ENCODE measurements at regions of chr1 and their contacts with region 1.

Region 1: GRCh38 chr1:26799479-26800142 is 11.9 kb downstream of the PIGV start:
- DNase-seq: peak; percentile 63
- ATAC-seq: peak; percentile 76
- H3K4me3 Mint-ChIP-seq: peak overlapping the region; percentile 56
- H3K27ac Mint-ChIP-seq: peak overlapping the region; percentile 97
- H3K4me1 Mint-ChIP-seq: peaks cover 47% of the 10 kb centered on the region
- H3K27me3 Mint-ChIP-seq: no peaks in the 10 kb centered on the region

Region 2: GRCh38 chr1:26761217-26761616 is 38.4 kb before region 1 on chr1:
- CTCF ChIA-PET with region 1: no interaction called
- DNase-seq: no peak
- ATAC-seq: no peak
- H3K4me3 Mint-ChIP-seq: no peak overlapping the region
- H3K27ac Mint-ChIP-seq: no peak overlapping the region
- H3K4me1 Mint-ChIP-seq: peaks cover 4% of the 10 kb centered on the region
- H3K27me3 Mint-ChIP-seq: no peaks in the 10 kb centered on the region

Region 3: GRCh38 chr1:26820784-26821269 is 21.2 kb after region 1 on chr1:
- CTCF ChIA-PET with region 1: interaction called, 20 read pairs
- DNase-seq: peak; percentile 64
- ATAC-seq: peak; percentile 94
- H3K4me3 Mint-ChIP-seq: peak overlapping the region; percentile 70
- H3K27ac Mint-ChIP-seq: peak overlapping the region; percentile 82
- H3K4me1 Mint-ChIP-seq: peaks cover 23% of the 10 kb centered on the region
- H3K27me3 Mint-ChIP-seq: no peaks in the 10 kb centered on the region

Region 4: GRCh38 chr1:26826261-26827105 is 26.9 kb after region 1 on chr1 and contains the start of gene ZDHHC18:
- CTCF ChIA-PET with region 1: interaction called, 59 read pairs
- DNase-seq: peak; percentile 70
- ATAC-seq: peak; percentile 93
- H3K4me3 Mint-ChIP-seq: peak within 1 kb of the TSS; percentile 90
- H3K27ac Mint-ChIP-seq: peak within 1 kb of the TSS; percentile 85
- H3K4me1 Mint-ChIP-seq: peaks cover 52% of the 10 kb centered on the region
- H3K27me3 Mint-ChIP-seq: no peaks in the 10 kb centered on the region
- total RNA-seq, gene ZDHHC18: 53.1 to 54.9 TPM

Region 5: GRCh38 chr1:26853156-26853555 is 53.5 kb after region 1 on chr1:
- CTCF ChIA-PET with region 1: no interaction called
- DNase-seq: peak; percentile 81
- ATAC-seq: peak; percentile 81
- H3K4me3 Mint-ChIP-seq: no peak overlapping the region
- H3K27ac Mint-ChIP-seq: peak overlapping the region; percentile 41
- H3K4me1 Mint-ChIP-seq: no peaks in the 10 kb centered on the region
- H3K27me3 Mint-ChIP-seq: no peaks in the 10 kb centered on the region